ENCODE measurements at regions of chr3 and their contacts with region 1.

Region 1: GRCh38 chr3:16550676-16551341 is 37.3 kb upstream of the RFTN1 start:
- DNase-seq: peak; percentile 93
- H3K4me3 ChIP-seq: peak overlapping the region; percentile 12 to 36 (median 20)
- H3K27ac ChIP-seq: no peak overlapping the region
- H3K4me1 ChIP-seq: peaks cover 9 to 14% (median 11%) of the 10 kb centered on the region in 4 donors
- H3K27me3 ChIP-seq: no peaks in the 10 kb centered on the region
- CTCF ChIP-seq: peak; percentile 82 to 94 (median 91)
- EP300 ChIP-seq: no peak
- POLR2A ChIP-seq: no peak

Region 2: GRCh38 chr3:15743587-15744009 is 807.2 kb before region 1 on chr3:
- intact Hi-C with region 1: no loop called
- DNase-seq: no peak
- H3K4me3 ChIP-seq: no peak overlapping the region
- H3K27ac ChIP-seq: no peak overlapping the region
- H3K4me1 ChIP-seq: no peaks in the 10 kb centered on the region
- H3K27me3 ChIP-seq: no peaks in the 10 kb centered on the region
- CTCF ChIP-seq: no peak
- EP300 ChIP-seq: no peak
- POLR2A ChIP-seq: no peak

Region 3: GRCh38 chr3:16264708-16265454 is 285.9 kb before region 1 on chr3 and contains the starts of genes DPH3 and OXNAD1:
- intact Hi-C with region 1: loop called (anchors 1 kb)
- DNase-seq: peak; percentile 100
- H3K4me3 ChIP-seq: peak within 1 kb of the TSS; percentile 74 to 97 (median 86)
- H3K27ac ChIP-seq: peak within 1 kb of the TSS; percentile 93 to 94 (median 93)
- H3K4me1 ChIP-seq: peaks cover 38 to 67% (median 62%) of the 10 kb centered on the region in 4 donors
- H3K27me3 ChIP-seq: no peaks in the 10 kb centered on the region
- CTCF ChIP-seq: peak in 2 of 3 experiments; percentile 22 to 33
- EP300 ChIP-seq: no peak
- POLR2A ChIP-seq: peak; percentile 60
- total RNA-seq, gene DPH3: 27.2 to 50.7 (median 37.6) TPM
- total RNA-seq, gene OXNAD1: 6.7 to 13.3 (median 10.2) TPM

Region 4: GRCh38 chr3:16290007-16290826 is 260.6 kb before region 1 on chr3:
- intact Hi-C with region 1: loop called (anchors 2 kb)
- DNase-seq: no peak
- H3K4me3 ChIP-seq: peak overlapping the region in 1 of 4 donors; percentile 9
- H3K27ac ChIP-seq: peak overlapping the region; percentile 8 to 56 (median 29)
- H3K4me1 ChIP-seq: peaks cover 25 to 55% (median 44%) of the 10 kb centered on the region in 4 donors
- H3K27me3 ChIP-seq: no peaks in the 10 kb centered on the region
- CTCF ChIP-seq: peak; percentile 81 to 88 (median 84)
- EP300 ChIP-seq: no peak
- POLR2A ChIP-seq: no peak

Region 5: GRCh38 chr3:16633948-16634347 is 83.1 kb after region 1 on chr3:
- intact Hi-C with region 1: no loop called
- DNase-seq: no peak
- H3K4me3 ChIP-seq: no peak overlapping the region
- H3K27ac ChIP-seq: no peak overlapping the region
- H3K4me1 ChIP-seq: peaks cover 0 to 5% (median 0%) of the 10 kb centered on the region in 4 donors
- H3K27me3 ChIP-seq: no peaks in the 10 kb centered on the region
- CTCF ChIP-seq: no peak
- EP300 ChIP-seq: no peak
- POLR2A ChIP-seq: no peak